ENCODE measurements at regions of chr6 and their contacts with region 1.

Region 1: DNA sequence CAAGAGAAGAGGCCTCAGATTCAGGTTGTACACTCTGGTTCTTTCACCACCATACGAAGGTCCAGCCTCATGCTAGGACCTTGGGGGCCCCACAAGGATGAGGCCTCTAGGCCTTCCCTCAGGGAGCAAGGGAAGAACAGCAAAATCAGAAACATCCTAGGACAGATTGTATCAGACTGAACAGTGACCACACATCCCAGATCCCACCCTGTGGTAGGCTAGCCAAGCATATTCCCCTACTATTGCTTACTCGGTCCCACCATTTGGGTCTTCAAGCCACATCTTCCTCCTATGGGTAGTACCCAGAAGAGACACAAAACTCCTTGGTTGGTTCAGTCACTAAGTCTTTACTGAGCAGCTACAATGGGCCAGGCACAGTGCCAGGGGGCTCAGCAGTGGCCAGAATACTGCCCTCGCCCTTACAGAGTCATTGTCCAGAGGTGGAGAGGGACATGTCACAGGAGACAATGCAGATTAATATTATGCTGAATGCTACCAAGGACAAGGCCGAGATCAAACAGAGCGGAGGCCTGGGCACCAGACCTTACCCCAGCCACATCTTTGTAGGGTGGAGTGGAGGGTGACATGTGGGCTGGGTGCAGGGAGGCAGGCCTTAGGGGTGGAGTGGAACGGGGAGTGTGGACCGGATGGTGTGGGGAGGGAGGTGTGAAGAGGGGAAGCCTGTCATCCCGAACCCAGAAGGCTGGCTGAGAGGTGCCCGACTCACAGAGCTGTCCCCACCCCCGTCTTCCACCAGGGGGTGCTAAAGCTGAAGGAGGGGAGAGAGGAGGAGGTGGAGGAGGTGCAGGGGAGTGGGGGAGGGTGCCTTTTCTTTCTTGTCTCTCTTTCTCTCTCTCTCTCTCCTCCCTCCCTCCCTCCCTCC is 6.8 kb upstream of the MAPK13 start:
- DNase-seq: peak; percentile 66
- H3K4me3 ChIP-seq: no peak overlapping the region
- H3K27ac ChIP-seq: no peak overlapping the region
- H3K4me1 ChIP-seq: peaks cover 37% of the 10 kb centered on the region
- H3K27me3 ChIP-seq: no peaks in the 10 kb centered on the region
- CTCF ChIP-seq: peak; percentile 54 to 92
- POLR2A ChIP-seq: no peak

Region 2: DNA sequence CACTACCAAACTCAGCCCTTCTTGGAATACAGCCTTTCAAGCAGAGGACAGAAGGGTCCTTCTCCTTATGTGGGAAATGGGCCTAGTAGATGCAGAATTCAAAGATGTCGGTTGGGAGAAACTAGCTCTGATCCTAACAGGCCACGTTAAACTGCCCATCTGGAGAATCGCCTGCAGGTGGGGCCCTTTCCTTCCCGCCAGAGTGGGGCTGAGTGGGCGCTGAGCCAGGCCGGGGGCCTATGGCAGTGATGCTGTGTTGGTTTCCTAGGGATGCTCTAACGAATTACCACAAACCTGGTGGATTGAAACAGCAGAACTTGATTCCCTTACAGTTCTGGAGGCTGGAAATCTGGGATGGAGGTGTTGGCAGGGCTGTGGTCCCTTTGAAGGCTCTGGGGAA is 15.9 kb after region 1 on chr6:
- CTCF ChIA-PET with region 1: interaction called, 10 read pairs
- POLR2A ChIA-PET with region 1: no interaction called
- dilution Hi-C with region 1: no loop called
- intact Hi-C with region 1: no loop called
- DNase-seq: no peak
- H3K4me3 ChIP-seq: no peak overlapping the region
- H3K27ac ChIP-seq: no peak overlapping the region
- H3K4me1 ChIP-seq: no peaks in the 10 kb centered on the region
- H3K27me3 ChIP-seq: no peaks in the 10 kb centered on the region
- CTCF ChIP-seq: peak; percentile 40 to 43
- POLR2A ChIP-seq: no peak

Region 3: GRCh38 chr6:36196880-36197548 is 73.5 kb after region 1 on chr6:
- CTCF ChIA-PET with region 1: interaction called, 25 read pairs
- POLR2A ChIA-PET with region 1: interaction called, 4 read pairs
- dilution Hi-C with region 1: no loop called
- intact Hi-C with region 1: loop called (anchors 1 kb)
- DNase-seq: peak; percentile 98
- H3K4me3 ChIP-seq: peak overlapping the region; percentile 56 to 90 (median 67)
- H3K27ac ChIP-seq: peak overlapping the region; percentile 83
- H3K4me1 ChIP-seq: peaks cover 12% of the 10 kb centered on the region
- H3K27me3 ChIP-seq: no peaks in the 10 kb centered on the region
- CTCF ChIP-seq: no peak
- POLR2A ChIP-seq: peak; percentile 59

Region 4: GRCh38 chr6:36245572-36246061 is 122.1 kb after region 1 on chr6:
- CTCF ChIA-PET with region 1: interaction called, 3 read pairs
- POLR2A ChIA-PET with region 1: no interaction called
- dilution Hi-C with region 1: no loop called
- intact Hi-C with region 1: loop called (anchors 2 kb)
- DNase-seq: no peak
- H3K4me3 ChIP-seq: no peak overlapping the region
- H3K27ac ChIP-seq: peak overlapping the region; percentile 88
- H3K4me1 ChIP-seq: peaks cover 46% of the 10 kb centered on the region
- H3K27me3 ChIP-seq: no peaks in the 10 kb centered on the region
- CTCF ChIP-seq: peak; percentile 25 to 42
- POLR2A ChIP-seq: no peak

Region 5: GRCh38 chr6:36360241-36361054 is 236.9 kb after region 1 on chr6:
- CTCF ChIA-PET with region 1: interaction called, 17 read pairs
- POLR2A ChIA-PET with region 1: no interaction called
- dilution Hi-C with region 1: no loop called
- intact Hi-C with region 1: no loop called
- DNase-seq: peak; percentile 69
- H3K4me3 ChIP-seq: no peak overlapping the region
- H3K27ac ChIP-seq: no peak overlapping the region
- H3K4me1 ChIP-seq: peaks cover 17% of the 10 kb centered on the region
- H3K27me3 ChIP-seq: peaks cover 0 to 5% of the 10 kb centered on the region in 2 experiments
- CTCF ChIP-seq: peak; percentile 80 to 82
- POLR2A ChIP-seq: no peak

Measured in endothelial cell of umbilical vein (primary cell).